AG04450 (cell line): ENCODE measurements at regions of chr10 and their contacts with region 1.

Region 1: DNA sequence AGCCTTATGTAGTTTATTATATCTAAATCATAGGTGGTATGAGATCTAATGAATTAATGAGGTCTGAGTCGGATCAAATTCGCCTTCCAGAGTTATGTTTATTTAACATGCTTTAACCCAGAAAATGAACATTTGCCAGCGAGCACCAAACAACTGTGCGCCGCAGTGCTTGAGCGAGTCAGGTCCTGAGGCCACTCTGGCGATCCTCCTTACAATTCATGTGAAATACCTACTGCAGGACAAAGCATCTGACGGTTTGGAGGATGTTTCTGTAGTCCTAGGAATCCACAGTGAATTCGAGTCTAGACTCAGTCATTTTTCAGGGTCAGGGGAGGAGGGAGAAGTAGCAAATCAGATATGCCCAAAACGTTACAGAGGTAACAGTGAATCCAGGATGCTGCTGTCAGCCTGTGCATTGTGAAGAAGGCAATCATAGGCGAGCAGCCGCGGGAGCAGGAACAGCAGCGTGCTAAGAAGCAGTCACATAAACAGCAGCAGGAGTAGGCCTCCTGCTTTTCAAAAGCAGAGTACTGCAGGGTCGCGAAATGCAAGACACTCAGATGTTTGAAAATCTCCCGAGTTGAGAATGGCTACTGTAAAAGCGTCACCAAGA is 120.2 kb downstream of the CACNB2 start:
- DNase-seq: no peak
- H3K4me3 ChIP-seq: no peak overlapping the region
- H3K27ac ChIP-seq: no peak overlapping the region
- H3K27me3 ChIP-seq: no peaks in the 10 kb centered on the region
- CTCF ChIP-seq: no peak

Region 2: GRCh38 chr10:18577823-18578685 is 317.6 kb after region 1 on chr10:
- CTCF ChIA-PET with region 1: no interaction called
- POLR2A ChIA-PET with region 1: interaction called, 12 read pairs
- DNase-seq: no peak
- H3K4me3 ChIP-seq: no peak overlapping the region
- H3K27ac ChIP-seq: no peak overlapping the region
- H3K27me3 ChIP-seq: no peaks in the 10 kb centered on the region
- CTCF ChIP-seq: no peak